ENCODE measurements at regions of chr6 and their contacts with region 1.

Region 1: GRCh38 chr6:73520688-73521350 is at the start of gene EEF1A1:
- DNase-seq: peak; percentile 100
- H3K4me3 ChIP-seq: peak within 1 kb of the TSS; percentile 83 to 94 (median 90)
- H3K27ac ChIP-seq: peak within 1 kb of the TSS; percentile 99 to 100 (median 99)
- H3K4me1 ChIP-seq: peaks cover 28 to 52% of the 10 kb centered on the region in 2 donors
- H3K27me3 ChIP-seq: no peaks in the 10 kb centered on the region
- CTCF ChIP-seq: no peak
- POLR2A ChIP-seq: peak; percentile 100
- total RNA-seq, gene EEF1A1: 7,361 to 13,514 (median 9,188) TPM

Region 2: GRCh38 chr6:73566954-73567591 is 46.3 kb after region 1 on chr6:
- intact Hi-C with region 1: loop called in 1 of 2 experiments (anchors 5 kb)
- DNase-seq: peak; percentile 29 to 80 (median 66)
- H3K4me3 ChIP-seq: no peak overlapping the region
- H3K27ac ChIP-seq: peak overlapping the region in 1 of 5 donors; percentile 63
- H3K4me1 ChIP-seq: peaks cover 0 to 4% of the 10 kb centered on the region in 2 donors
- H3K27me3 ChIP-seq: no peaks in the 10 kb centered on the region
- CTCF ChIP-seq: no peak
- POLR2A ChIP-seq: no peak

Region 3: DNA sequence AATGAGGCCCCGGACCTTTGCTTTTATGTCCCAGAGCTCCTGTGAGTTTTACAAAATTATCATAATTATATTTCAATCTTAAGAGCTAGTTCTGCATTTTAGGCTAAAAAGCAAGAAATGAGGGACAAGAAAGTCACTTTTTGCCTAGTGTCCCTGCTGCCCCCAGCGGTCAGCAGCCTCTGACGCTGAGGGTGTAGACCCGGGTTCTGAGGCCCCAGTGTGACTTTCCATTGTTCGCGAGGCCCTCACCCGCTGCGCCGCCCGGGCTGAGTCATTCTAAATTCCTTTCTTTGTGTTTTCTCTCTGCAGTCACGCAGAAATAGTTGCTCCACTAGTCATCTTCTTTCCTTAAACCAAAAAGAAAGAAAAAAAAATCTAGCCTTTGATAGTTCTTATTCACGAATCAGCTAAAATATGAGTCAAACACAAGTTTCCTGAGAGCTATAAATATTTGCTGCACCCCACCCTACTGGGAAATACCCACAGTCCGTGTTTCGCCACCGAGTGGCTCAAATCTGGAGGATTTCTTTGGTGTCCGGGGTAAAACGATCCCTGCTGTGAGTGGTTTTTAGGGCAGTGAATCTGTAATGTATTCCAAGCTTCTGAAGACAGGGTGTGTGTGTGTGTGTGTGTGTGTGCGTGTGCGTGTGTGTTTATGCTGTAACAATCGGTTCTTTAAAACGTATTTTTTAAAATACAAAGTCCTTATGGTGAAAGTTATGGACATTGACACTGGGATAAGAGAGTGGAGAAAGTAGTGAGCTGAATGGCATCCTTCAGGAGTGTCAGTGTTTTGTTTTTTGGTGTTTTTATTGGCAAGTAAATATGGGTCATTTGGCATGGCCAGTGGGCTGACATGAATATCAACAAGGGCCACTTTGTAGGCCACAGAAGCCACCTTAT is 59.7 kb after region 1 on chr6:
- intact Hi-C with region 1: loop called (anchors 5 to 10 kb)
- DNase-seq: peak; percentile 78 to 95 (median 94)
- H3K4me3 ChIP-seq: peak overlapping the region in 2 of 4 donors; percentile 15 to 38
- H3K27ac ChIP-seq: peak overlapping the region; percentile 74 to 97 (median 94)
- H3K4me1 ChIP-seq: peaks cover 29 to 35% of the 10 kb centered on the region in 2 donors
- H3K27me3 ChIP-seq: no peaks in the 10 kb centered on the region
- CTCF ChIP-seq: peak; percentile 16 to 54 (median 48)
- POLR2A ChIP-seq: peak in 1 of 2 donors; percentile 79

Region 4: GRCh38 chr6:73585566-73586415 is 65.0 kb after region 1 on chr6:
- intact Hi-C with region 1: loop called (anchors 5 to 10 kb)
- DNase-seq: peak; percentile 58 to 79 (median 65)
- H3K4me3 ChIP-seq: peak overlapping the region in 2 of 4 donors; percentile 4 to 40
- H3K27ac ChIP-seq: peak overlapping the region; percentile 91 to 99 (median 94)
- H3K4me1 ChIP-seq: peaks cover 25 to 32% of the 10 kb centered on the region in 2 donors
- H3K27me3 ChIP-seq: no peaks in the 10 kb centered on the region
- CTCF ChIP-seq: no peak
- POLR2A ChIP-seq: peak in 1 of 2 donors; percentile 66

Region 5: GRCh38 chr6:73610444-73611275 is 89.8 kb after region 1 on chr6:
- intact Hi-C with region 1: loop called in 1 of 2 experiments (anchors 5 kb)
- DNase-seq: no peak
- H3K4me3 ChIP-seq: no peak overlapping the region
- H3K27ac ChIP-seq: no peak overlapping the region
- H3K4me1 ChIP-seq: peaks cover 0 to 8% of the 10 kb centered on the region in 2 donors
- H3K27me3 ChIP-seq: no peaks in the 10 kb centered on the region
- CTCF ChIP-seq: peak; percentile 36 to 84 (median 67)
- POLR2A ChIP-seq: no peak

Region 6: GRCh38 chr6:73782911-73783310 is 262.1 kb after region 1 on chr6:
- intact Hi-C with region 1: no loop called
- DNase-seq: no peak
- H3K4me3 ChIP-seq: no peak overlapping the region
- H3K27ac ChIP-seq: no peak overlapping the region
- H3K4me1 ChIP-seq: no peaks in the 10 kb centered on the region
- H3K27me3 ChIP-seq: no peaks in the 10 kb centered on the region
- CTCF ChIP-seq: no peak
- POLR2A ChIP-seq: no peak